ENCODE measurements at regions of chr6 and their contacts with region 1.

Region 1: GRCh38 chr6:5003604-5004372 is at the start of gene RPP40:
- DNase-seq: peak; percentile 98
- ATAC-seq: peak; percentile 94
- H3K4me3 Mint-ChIP-seq: peak within 1 kb of the TSS; percentile 94
- H3K27ac Mint-ChIP-seq: peak within 1 kb of the TSS; percentile 98
- H3K4me1 Mint-ChIP-seq: peaks cover 13% of the 10 kb centered on the region
- H3K27me3 Mint-ChIP-seq: no peaks in the 10 kb centered on the region
- CTCF ChIP-seq: no peak
- total RNA-seq, gene RPP40: 5.9 and 7.1 TPM in 2 replicates

Region 2: DNA sequence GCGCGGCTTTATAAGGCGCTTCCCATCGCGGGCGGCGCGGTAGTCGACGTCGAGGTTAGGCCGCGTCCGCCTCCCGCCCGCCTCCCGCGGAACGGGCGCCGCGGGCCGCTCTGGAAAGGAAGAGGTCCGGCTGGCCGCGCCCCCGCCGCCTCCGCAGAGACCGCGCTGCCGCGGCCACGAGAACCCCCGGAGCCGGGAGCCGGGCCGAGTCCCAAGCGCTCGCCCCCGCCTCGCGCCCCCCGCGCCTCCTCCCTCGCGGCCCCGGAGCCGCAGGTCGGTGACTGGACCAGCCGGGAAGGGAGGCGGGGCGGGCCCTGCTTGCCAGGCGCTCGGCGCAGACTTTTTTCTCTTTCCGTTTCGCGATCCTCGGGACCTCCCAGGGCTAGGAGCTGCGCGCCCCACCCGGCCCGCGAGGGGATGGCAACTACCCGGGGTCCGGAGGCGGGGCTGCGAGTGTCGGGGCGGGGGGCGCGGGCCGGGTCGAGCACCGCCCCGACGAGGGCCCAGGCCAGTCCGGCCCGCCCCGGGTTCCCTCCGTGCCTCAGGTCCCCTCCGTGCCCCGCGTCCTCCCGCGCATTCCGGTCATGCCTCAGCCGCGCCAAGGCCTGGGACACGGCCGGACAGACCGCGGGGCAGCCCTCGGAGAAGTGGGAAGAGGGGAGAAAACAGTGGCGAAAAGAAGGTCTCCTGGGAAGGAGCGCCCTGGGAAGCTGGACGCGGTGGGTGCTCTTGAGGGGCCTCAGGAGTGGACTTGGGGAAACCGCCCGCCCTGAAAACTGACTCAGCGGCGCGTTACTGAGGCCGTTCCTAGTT is 1251.9 kb before region 1 on chr6:
- CTCF ChIA-PET with region 1: no interaction called
- POLR2A ChIA-PET with region 1: no interaction called
- intact Hi-C with region 1: loop called (anchors 5 kb)
- DNase-seq: peak; percentile 72
- ATAC-seq: peak; percentile 73
- H3K4me3 Mint-ChIP-seq: peak overlapping the region; percentile 72
- H3K27ac Mint-ChIP-seq: no peak overlapping the region
- H3K4me1 Mint-ChIP-seq: peaks cover 52% of the 10 kb centered on the region
- H3K27me3 Mint-ChIP-seq: no peaks in the 10 kb centered on the region
- CTCF ChIP-seq: no peak

Region 3: DNA sequence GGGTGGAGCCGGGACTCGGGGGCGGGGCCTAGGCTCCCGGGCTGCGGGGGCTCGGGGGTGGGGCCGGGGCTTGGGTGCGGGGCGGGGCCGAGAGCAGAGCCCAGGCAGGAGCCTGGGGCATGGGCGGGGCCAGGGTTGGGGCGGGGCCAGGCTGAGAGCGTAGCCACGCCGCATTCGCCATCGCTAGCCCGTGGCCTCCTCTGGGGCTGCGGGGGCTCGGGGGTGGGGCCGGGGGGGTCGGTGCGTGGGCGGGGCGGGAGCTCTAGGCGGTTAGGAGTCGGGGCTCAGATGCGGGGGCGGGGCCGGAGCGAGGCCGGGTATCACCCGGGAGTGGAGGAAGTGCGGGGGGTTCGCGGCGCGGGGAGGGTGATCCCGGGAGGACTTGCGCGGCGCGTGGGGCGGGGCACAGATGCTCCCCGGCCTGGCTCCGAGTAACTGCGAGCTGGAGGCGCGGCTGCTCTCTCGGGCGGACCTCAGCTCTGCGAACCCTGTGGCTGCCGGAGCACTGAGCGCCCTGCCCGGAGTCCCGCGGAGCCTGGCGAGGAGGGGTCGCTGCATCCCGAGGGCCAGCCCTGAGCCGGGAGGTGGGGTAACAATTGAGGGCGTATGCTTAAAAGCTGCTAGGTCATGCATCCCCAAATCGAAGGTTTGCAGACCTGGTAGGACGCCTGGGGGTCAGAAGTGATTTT is 868.0 kb before region 1 on chr6:
- CTCF ChIA-PET with region 1: no interaction called
- POLR2A ChIA-PET with region 1: no interaction called
- intact Hi-C with region 1: loop called (anchors 1 kb)
- DNase-seq: peak; percentile 83
- ATAC-seq: peak; percentile 92
- H3K4me3 Mint-ChIP-seq: peak overlapping the region; percentile 85
- H3K27ac Mint-ChIP-seq: peak overlapping the region; percentile 76
- H3K4me1 Mint-ChIP-seq: peaks cover 27% of the 10 kb centered on the region
- H3K27me3 Mint-ChIP-seq: no peaks in the 10 kb centered on the region
- CTCF ChIP-seq: no peak

Region 4: GRCh38 chr6:4413073-4413472 is 590.7 kb before region 1 on chr6:
- CTCF ChIA-PET with region 1: no interaction called
- POLR2A ChIA-PET with region 1: no interaction called
- intact Hi-C with region 1: loop called (anchors 2 kb)
- DNase-seq: no peak
- ATAC-seq: no peak
- H3K4me3 Mint-ChIP-seq: no peak overlapping the region
- H3K27ac Mint-ChIP-seq: no peak overlapping the region
- H3K4me1 Mint-ChIP-seq: peaks cover 26% of the 10 kb centered on the region
- H3K27me3 Mint-ChIP-seq: no peaks in the 10 kb centered on the region
- CTCF ChIP-seq: no peak

Region 5: DNA sequence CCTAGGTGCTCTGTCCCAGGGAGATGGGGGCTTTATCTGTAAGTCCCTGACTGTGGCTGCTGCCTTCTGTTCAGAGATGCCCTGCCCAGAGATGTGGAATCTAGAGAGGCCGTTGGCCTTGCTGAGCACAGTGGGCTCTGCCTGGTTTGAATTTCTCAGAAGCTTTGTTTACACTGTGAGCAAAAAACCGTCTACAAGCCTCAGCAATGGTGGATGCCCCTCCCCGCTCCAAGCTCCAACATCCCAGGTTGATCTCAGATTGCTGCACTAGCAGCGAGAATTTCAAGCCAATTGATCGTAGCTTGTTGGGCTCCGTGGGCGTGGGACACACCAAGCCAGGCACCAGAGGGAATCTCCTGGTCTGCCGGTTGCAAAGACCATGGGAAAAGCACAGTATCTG is 16.4 kb after region 1 on chr6:
- CTCF ChIA-PET with region 1: no interaction called
- POLR2A ChIA-PET with region 1: no interaction called
- intact Hi-C with region 1: no loop called
- DNase-seq: no peak
- ATAC-seq: no peak
- H3K4me3 Mint-ChIP-seq: no peak overlapping the region
- H3K27ac Mint-ChIP-seq: no peak overlapping the region
- H3K4me1 Mint-ChIP-seq: no peaks in the 10 kb centered on the region
- H3K27me3 Mint-ChIP-seq: peaks cover under 1% of the 10 kb centered on the region
- CTCF ChIP-seq: no peak

Region 6: DNA sequence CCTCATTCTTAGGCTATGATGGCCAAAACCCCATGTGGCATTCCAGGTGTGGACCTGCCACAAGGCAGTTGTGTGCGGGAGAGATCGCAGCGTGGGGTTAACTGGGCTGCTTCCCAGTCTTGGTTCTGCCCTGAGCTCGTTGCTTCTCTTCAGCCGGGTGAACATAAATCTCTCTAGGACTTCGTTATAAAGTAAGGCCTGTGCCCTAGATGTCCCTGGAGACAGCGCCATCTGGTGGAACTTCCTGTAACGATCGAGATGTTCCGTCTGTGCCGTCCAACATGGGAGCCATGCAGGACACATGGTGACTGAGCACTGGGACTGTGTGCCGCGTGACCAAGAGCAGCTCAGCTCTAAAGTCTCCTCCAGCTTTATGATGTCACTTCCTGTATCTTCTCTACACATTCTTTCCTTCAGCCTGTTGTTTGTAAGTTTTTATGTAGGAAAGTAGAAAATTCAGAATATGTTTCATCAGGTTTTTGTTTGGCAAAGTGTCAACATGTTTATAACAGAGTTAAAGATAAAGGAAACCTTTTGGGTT is 26.9 kb after region 1 on chr6:
- CTCF ChIA-PET with region 1: interaction called, 3 read pairs
- POLR2A ChIA-PET with region 1: no interaction called
- intact Hi-C with region 1: loop called (anchors 1 kb)
- DNase-seq: peak; percentile 48
- ATAC-seq: peak; percentile 96
- H3K4me3 Mint-ChIP-seq: no peak overlapping the region
- H3K27ac Mint-ChIP-seq: no peak overlapping the region
- H3K4me1 Mint-ChIP-seq: peaks cover 23% of the 10 kb centered on the region
- H3K27me3 Mint-ChIP-seq: peaks cover 3% of the 10 kb centered on the region
- CTCF ChIP-seq: no peak

Region 7: GRCh38 chr6:5085193-5085647 is 81.4 kb after region 1 on chr6 and contains the start of gene PPP1R3G:
- CTCF ChIA-PET with region 1: no interaction called
- POLR2A ChIA-PET with region 1: no interaction called
- intact Hi-C with region 1: loop called (anchors 2 kb)
- DNase-seq: no peak
- ATAC-seq: peak; percentile 11
- H3K4me3 Mint-ChIP-seq: peak within 1 kb of the TSS; percentile 86
- H3K27ac Mint-ChIP-seq: no peak within 1 kb of the TSS
- H3K4me1 Mint-ChIP-seq: peaks cover 27% of the 10 kb centered on the region
- H3K27me3 Mint-ChIP-seq: peaks cover 22% of the 10 kb centered on the region
- CTCF ChIP-seq: no peak
- total RNA-seq, gene PPP1R3G: 0.11 and 0.15 TPM in 2 replicates